CD4-positive, alpha-beta memory T cell (primary cell): ENCODE measurements at regions of chr17 and their contacts with region 1.

Region 1: GRCh38 chr17:7915611-7916382 is at the start of gene RNF227:
- DNase-seq: peak; percentile 84 to 88 (median 84)
- H3K4me3 ChIP-seq: peak within 1 kb of the TSS; percentile 33 to 71
- H3K4me3 Mint-ChIP-seq: peak within 1 kb of the TSS; percentile 88 to 95 (median 90)
- H3K27ac ChIP-seq: peak within 1 kb of the TSS; percentile 67
- H3K27ac Mint-ChIP-seq: peak within 1 kb of the TSS; percentile 91 to 95 (median 93)
- H3K4me1 ChIP-seq: peaks cover 26% of the 10 kb centered on the region
- H3K4me1 Mint-ChIP-seq: peaks cover 19 to 34% (median 24%) of the 10 kb centered on the region in 4 donors
- H3K27me3 ChIP-seq: no peaks in the 10 kb centered on the region
- H3K27me3 Mint-ChIP-seq: no peaks in the 10 kb centered on the region
- total RNA-seq, gene RNF227: 6.7 to 7.4 TPM

Region 2: DNA sequence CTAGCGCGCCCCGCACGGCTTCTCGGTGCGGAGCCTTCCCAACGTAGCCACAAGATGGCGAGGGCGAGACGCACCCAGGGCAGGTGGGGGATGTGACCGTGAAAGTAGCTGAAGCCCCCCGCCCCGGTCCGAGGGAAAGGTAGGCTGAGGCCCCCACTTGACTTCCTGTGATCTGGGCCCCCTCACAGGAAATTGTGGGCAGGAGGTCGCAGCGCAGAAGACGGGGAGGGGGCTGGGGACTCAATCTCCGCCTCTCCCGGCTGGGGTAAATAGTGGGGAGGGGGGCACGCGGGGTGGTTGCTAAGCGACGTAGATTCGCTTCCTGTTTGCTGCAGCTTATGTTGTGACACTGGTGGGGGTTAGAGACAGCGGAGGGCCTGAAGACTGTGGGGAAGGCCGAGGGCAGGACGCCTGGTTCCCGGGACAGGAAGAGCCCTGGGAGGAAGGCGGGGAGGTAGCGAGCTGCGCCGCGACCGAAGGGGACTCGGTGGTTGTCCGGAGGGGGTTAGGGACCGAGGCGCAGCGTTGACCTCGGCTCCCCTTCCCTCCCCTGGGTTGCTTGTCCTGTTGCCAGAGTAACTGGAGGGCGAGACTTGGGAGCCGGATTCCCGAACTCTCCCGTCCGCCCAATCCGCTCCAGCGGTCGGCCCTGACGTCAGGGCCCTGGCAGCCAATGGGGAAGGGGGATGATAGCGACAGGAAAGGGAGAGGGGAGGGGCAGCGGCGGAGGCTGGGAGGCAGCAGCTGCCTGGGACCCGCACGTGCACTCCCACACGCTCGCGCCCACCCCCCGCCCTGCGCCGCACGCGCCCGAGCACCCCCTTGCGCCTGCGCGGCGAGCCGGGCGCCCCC is 80.6 kb before region 1 on chr17:
- CTCF ChIA-PET with region 1: interaction called, 3 read pairs
- POLR2A ChIA-PET with region 1: interaction called, 12 read pairs
- intact Hi-C with region 1: loop called (anchors 2 kb)
- DNase-seq: peak; percentile 90 to 98 (median 92)
- H3K4me3 ChIP-seq: peak overlapping the region; percentile 76 to 84
- H3K4me3 Mint-ChIP-seq: peak overlapping the region; percentile 90 to 98 (median 94)
- H3K27ac ChIP-seq: peak overlapping the region; percentile 98
- H3K27ac Mint-ChIP-seq: peak overlapping the region; percentile 99 to 100 (median 99)
- H3K4me1 ChIP-seq: peaks cover 45% of the 10 kb centered on the region
- H3K4me1 Mint-ChIP-seq: peaks cover 36 to 64% (median 42%) of the 10 kb centered on the region in 4 donors
- H3K27me3 ChIP-seq: no peaks in the 10 kb centered on the region
- H3K27me3 Mint-ChIP-seq: peaks cover 0 to 9% of the 10 kb centered on the region in 2 donors

Region 3: GRCh38 chr17:7862692-7863437 is 52.9 kb before region 1 on chr17:
- CTCF ChIA-PET with region 1: interaction called, 44 read pairs
- POLR2A ChIA-PET with region 1: interaction called, 26 read pairs
- intact Hi-C with region 1: loop called (anchors 1 kb)
- DNase-seq: peak; percentile 35 to 58 (median 41)
- H3K4me3 ChIP-seq: no peak overlapping the region
- H3K4me3 Mint-ChIP-seq: no peak overlapping the region
- H3K27ac ChIP-seq: no peak overlapping the region
- H3K27ac Mint-ChIP-seq: peak overlapping the region in 5 of 7 donors; percentile 11 to 80 (median 15)
- H3K4me1 ChIP-seq: peaks cover 27% of the 10 kb centered on the region
- H3K4me1 Mint-ChIP-seq: peaks cover 18 to 31% (median 22%) of the 10 kb centered on the region in 4 donors
- H3K27me3 ChIP-seq: no peaks in the 10 kb centered on the region
- H3K27me3 Mint-ChIP-seq: no peaks in the 10 kb centered on the region

Region 4: DNA sequence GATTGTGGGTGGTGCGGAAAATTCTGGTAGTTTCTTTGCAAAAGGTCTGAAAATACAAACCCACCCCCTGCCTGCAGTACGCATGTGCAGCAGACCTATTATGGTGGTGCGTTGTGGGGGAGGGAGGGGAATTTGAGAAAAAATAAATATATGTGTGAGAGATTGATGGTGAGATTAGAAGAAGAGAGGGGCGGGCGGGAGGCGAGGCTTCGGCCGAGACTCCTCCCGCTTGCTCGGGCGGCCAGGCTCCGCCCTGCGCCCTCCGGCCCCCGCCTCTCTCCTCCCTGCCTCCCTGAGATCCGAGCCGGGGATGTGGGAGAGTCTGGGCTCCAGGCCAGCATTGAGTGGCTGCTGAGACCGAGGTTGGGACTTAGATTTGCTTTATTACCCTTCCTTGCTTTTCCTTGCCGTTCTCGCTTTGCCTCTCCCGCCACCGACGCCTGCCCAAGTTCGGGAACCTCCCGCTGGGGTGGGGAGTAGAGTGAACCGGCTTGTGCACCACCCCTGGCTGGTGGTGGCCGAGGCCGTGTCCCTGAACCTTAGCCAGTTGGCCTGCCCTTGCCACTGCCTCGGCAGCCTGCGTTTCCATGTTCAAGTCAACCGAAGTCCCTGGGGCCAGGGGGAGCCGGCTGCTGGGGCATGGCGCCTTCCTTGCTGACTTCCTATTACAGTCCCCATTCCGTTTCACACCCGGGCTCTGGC is 28.2 kb before region 1 on chr17:
- CTCF ChIA-PET with region 1: interaction called, 9 read pairs
- POLR2A ChIA-PET with region 1: interaction called, 11 read pairs
- intact Hi-C with region 1: loop called (anchors 1 kb)
- DNase-seq: peak; percentile 89 to 95 (median 92)
- H3K4me3 ChIP-seq: peak overlapping the region; percentile 86 to 96
- H3K4me3 Mint-ChIP-seq: no peak overlapping the region
- H3K27ac ChIP-seq: peak overlapping the region; percentile 65
- H3K27ac Mint-ChIP-seq: no peak overlapping the region
- H3K4me1 ChIP-seq: peaks cover 46% of the 10 kb centered on the region
- H3K4me1 Mint-ChIP-seq: peaks cover 10 to 16% (median 12%) of the 10 kb centered on the region in 4 donors
- H3K27me3 ChIP-seq: no peaks in the 10 kb centered on the region
- H3K27me3 Mint-ChIP-seq: no peaks in the 10 kb centered on the region

Region 5: GRCh38 chr17:8103549-8103948 is 187.8 kb after region 1 on chr17:
- CTCF ChIA-PET with region 1: no interaction called
- POLR2A ChIA-PET with region 1: no interaction called
- intact Hi-C with region 1: no loop called
- DNase-seq: no peak
- H3K4me3 ChIP-seq: no peak overlapping the region
- H3K4me3 Mint-ChIP-seq: no peak overlapping the region
- H3K27ac ChIP-seq: no peak overlapping the region
- H3K27ac Mint-ChIP-seq: no peak overlapping the region
- H3K4me1 ChIP-seq: no peaks in the 10 kb centered on the region
- H3K4me1 Mint-ChIP-seq: peaks cover 0 to 1% (median 0%) of the 10 kb centered on the region in 4 donors
- H3K27me3 ChIP-seq: no peaks in the 10 kb centered on the region
- H3K27me3 Mint-ChIP-seq: no peaks in the 10 kb centered on the region

Region 6: GRCh38 chr17:8248751-8249607 is 333.2 kb after region 1 on chr17 and contains the start of gene PFAS:
- CTCF ChIA-PET with region 1: no interaction called
- POLR2A ChIA-PET with region 1: no interaction called
- intact Hi-C with region 1: no loop called
- DNase-seq: peak; percentile 94 to 96 (median 94)
- H3K4me3 ChIP-seq: peak within 1 kb of the TSS; percentile 55 to 100
- H3K4me3 Mint-ChIP-seq: peak within 1 kb of the TSS; percentile 96 to 100 (median 98)
- H3K27ac ChIP-seq: peak within 1 kb of the TSS; percentile 98
- H3K27ac Mint-ChIP-seq: peak within 1 kb of the TSS; percentile 99 to 100 (median 100)
- H3K4me1 ChIP-seq: peaks cover 38% of the 10 kb centered on the region
- H3K4me1 Mint-ChIP-seq: peaks cover 33 to 68% (median 42%) of the 10 kb centered on the region in 4 donors
- H3K27me3 ChIP-seq: no peaks in the 10 kb centered on the region
- H3K27me3 Mint-ChIP-seq: peaks cover 0 to 7% of the 10 kb centered on the region in 2 donors
- total RNA-seq, gene PFAS: 23.0 to 29.1 TPM